ENCODE measurements at regions of chr14 and their contacts with region 1.

Region 1: GRCh38 chr14:34331728-34332623 is 130.1 kb downstream of the SPTSSA start:
- DNase-seq: peak; percentile 34 to 49 (median 43)
- H3K4me3 ChIP-seq: no peak overlapping the region
- H3K4me3 Mint-ChIP-seq: no peak overlapping the region
- H3K27ac ChIP-seq: no peak overlapping the region
- H3K27ac Mint-ChIP-seq: peak overlapping the region in 2 of 7 donors; percentile 2 to 46
- H3K4me1 ChIP-seq: no peaks in the 10 kb centered on the region
- H3K4me1 Mint-ChIP-seq: peaks cover 5 to 14% (median 6%) of the 10 kb centered on the region in 4 donors
- H3K27me3 ChIP-seq: no peaks in the 10 kb centered on the region
- H3K27me3 Mint-ChIP-seq: peaks cover 1 to 3% of the 10 kb centered on the region in 2 donors

Region 2: DNA sequence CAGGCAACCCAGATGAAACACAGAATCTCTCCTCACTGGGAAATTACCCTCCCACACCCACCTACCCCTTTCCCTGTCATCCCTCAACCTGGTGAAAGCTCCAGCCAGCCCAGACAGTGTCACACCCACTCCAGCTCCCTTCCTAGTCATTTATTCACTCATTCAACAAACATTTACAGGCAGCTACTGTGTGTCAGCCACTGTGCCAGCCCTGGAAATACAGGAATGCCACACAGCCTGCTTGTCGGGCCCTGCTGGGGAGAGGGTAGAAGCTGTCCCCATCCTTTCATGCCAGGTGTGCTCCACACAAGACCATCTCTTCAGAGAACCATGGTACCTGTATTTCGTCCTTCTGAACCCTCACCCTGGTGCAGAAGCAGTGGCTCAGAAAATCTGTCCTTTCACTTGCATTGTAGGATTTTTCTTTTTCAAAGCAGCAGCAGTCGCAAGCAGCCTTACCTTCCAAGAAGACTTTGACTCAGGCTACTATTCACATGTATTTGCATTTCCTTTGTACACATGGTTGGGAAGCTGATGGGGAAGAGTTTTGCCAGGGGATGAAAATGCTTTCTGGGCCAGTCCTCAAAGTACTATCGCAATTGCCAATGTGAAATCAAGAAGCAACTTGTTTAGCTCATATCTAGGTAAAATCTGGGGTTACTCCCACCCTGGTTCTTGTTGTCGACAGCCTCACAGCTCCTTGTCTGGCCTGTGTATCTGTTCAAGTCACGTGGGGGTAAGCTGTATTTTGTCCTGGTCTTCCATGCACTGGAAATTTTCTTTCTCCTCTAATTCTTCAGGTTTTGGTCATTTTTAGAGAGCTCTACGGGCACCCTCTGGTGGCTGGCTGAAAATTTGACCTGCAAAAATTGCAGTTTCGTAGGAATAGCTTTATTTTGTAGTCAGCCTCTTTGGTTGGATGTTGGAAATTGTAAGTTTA is 233.7 kb before region 1 on chr14:
- CTCF ChIA-PET with region 1: no interaction called
- POLR2A ChIA-PET with region 1: no interaction called
- intact Hi-C with region 1: no loop called
- DNase-seq: peak in 4 of 5 donors; percentile 13 to 26 (median 22)
- H3K4me3 ChIP-seq: no peak overlapping the region
- H3K4me3 Mint-ChIP-seq: no peak overlapping the region
- H3K27ac ChIP-seq: no peak overlapping the region
- H3K27ac Mint-ChIP-seq: no peak overlapping the region
- H3K4me1 ChIP-seq: peaks cover 6% of the 10 kb centered on the region
- H3K4me1 Mint-ChIP-seq: peaks cover 8 to 19% (median 13%) of the 10 kb centered on the region in 4 donors
- H3K27me3 ChIP-seq: no peaks in the 10 kb centered on the region
- H3K27me3 Mint-ChIP-seq: no peaks in the 10 kb centered on the region

Region 3: DNA sequence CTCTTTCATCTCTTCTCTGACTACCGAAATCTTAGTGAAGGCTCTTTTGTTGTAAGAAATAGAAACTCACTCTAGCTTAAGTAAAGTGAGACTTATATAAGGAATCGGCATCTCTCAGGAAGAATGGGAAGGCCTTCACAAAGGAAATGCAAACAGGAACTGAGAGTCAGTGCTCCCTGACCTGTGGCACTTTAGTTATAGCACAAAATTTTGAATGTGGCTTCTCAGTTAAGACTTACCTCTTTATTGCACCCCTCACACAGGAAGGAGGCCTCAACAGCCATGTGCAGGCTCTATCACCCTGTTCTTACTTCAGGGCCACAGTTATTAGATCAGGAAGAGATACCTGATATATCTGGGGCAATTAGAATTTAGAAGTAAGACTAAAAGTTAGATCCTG is 156.4 kb before region 1 on chr14:
- CTCF ChIA-PET with region 1: no interaction called
- POLR2A ChIA-PET with region 1: no interaction called
- intact Hi-C with region 1: no loop called
- DNase-seq: no peak
- H3K4me3 ChIP-seq: no peak overlapping the region
- H3K4me3 Mint-ChIP-seq: no peak overlapping the region
- H3K27ac ChIP-seq: no peak overlapping the region
- H3K27ac Mint-ChIP-seq: no peak overlapping the region
- H3K4me1 ChIP-seq: no peaks in the 10 kb centered on the region
- H3K4me1 Mint-ChIP-seq: no peaks in the 10 kb centered on the region
- H3K27me3 ChIP-seq: no peaks in the 10 kb centered on the region
- H3K27me3 Mint-ChIP-seq: no peaks in the 10 kb centered on the region

Region 4: GRCh38 chr14:34345718-34346465 is 13.9 kb after region 1 on chr14:
- CTCF ChIA-PET with region 1: interaction called, 12 read pairs
- POLR2A ChIA-PET with region 1: no interaction called
- intact Hi-C with region 1: no loop called
- DNase-seq: no peak
- H3K4me3 ChIP-seq: no peak overlapping the region
- H3K4me3 Mint-ChIP-seq: no peak overlapping the region
- H3K27ac ChIP-seq: no peak overlapping the region
- H3K27ac Mint-ChIP-seq: no peak overlapping the region
- H3K4me1 ChIP-seq: no peaks in the 10 kb centered on the region
- H3K4me1 Mint-ChIP-seq: peaks cover 0 to 1% (median 0%) of the 10 kb centered on the region in 4 donors
- H3K27me3 ChIP-seq: no peaks in the 10 kb centered on the region
- H3K27me3 Mint-ChIP-seq: no peaks in the 10 kb centered on the region

Region 5: GRCh38 chr14:34498684-34499412 is 166.9 kb after region 1 on chr14:
- CTCF ChIA-PET with region 1: interaction called, 4 read pairs
- POLR2A ChIA-PET with region 1: no interaction called
- intact Hi-C with region 1: loop called (anchors 1 kb)
- DNase-seq: peak in 1 of 5 donors; percentile 10
- H3K4me3 ChIP-seq: no peak overlapping the region
- H3K4me3 Mint-ChIP-seq: no peak overlapping the region
- H3K27ac ChIP-seq: no peak overlapping the region
- H3K27ac Mint-ChIP-seq: no peak overlapping the region
- H3K4me1 ChIP-seq: no peaks in the 10 kb centered on the region
- H3K4me1 Mint-ChIP-seq: no peaks in the 10 kb centered on the region
- H3K27me3 ChIP-seq: no peaks in the 10 kb centered on the region
- H3K27me3 Mint-ChIP-seq: no peaks in the 10 kb centered on the region

Region 6: DNA sequence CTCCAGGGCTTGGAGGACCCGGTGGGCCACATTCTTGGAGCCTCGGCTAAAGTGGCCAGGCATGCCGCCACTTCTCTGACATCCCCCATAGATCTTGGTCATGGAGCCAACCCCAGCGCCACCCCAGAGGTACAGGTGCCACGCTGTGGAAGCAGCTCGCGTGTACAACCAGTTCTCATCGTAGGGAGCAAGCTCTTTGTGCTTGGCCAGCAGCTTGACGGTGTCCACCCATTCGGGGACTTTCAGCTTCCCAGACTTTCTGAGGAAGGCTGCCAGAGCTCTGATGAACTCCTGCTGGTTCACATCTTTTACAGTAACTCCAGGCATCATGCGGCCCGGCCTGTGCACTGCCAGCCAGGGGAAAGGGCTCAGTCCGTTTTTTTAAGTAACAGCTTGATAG is 236.8 kb after region 1 on chr14:
- CTCF ChIA-PET with region 1: no interaction called
- POLR2A ChIA-PET with region 1: no interaction called
- intact Hi-C with region 1: no loop called
- DNase-seq: no peak
- H3K4me3 ChIP-seq: no peak overlapping the region
- H3K4me3 Mint-ChIP-seq: no peak overlapping the region
- H3K27ac ChIP-seq: no peak overlapping the region
- H3K27ac Mint-ChIP-seq: no peak overlapping the region
- H3K4me1 ChIP-seq: no peaks in the 10 kb centered on the region
- H3K4me1 Mint-ChIP-seq: no peaks in the 10 kb centered on the region
- H3K27me3 ChIP-seq: no peaks in the 10 kb centered on the region
- H3K27me3 Mint-ChIP-seq: no peaks in the 10 kb centered on the region